GM10248 (cell line): ENCODE measurements at regions of chr18 and their contacts with region 1.

Region 1: GRCh38 chr18:45722899-45723298 is 1.1 kb upstream of the SLC14A1 start:
- DNase-seq: peak; percentile 80
- CTCF ChIP-seq: peak; percentile 82

Region 2: DNA sequence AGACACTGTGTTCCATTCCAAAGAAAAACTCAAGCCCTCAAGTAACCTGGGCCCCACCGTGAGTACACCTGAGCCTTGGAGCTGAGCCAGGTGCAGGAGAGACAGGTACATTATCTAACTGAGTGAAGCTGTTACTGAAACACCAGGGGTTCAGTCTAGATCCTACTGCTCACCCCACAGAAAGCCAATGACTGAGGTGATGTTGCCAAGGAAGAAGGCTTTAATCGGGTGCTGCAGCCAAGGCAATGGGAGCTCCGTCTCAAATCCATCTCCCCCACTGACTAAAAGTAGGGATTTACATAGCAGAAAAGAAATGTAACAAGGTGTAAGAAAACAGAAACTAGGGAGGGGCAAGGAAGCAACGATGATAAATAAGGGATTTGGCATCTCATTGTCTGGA is 14.1 kb before region 1 on chr18:
- CTCF ChIA-PET with region 1: interaction called, 16 read pairs
- POLR2A ChIA-PET with region 1: no interaction called
- DNase-seq: no peak
- CTCF ChIP-seq: no peak